ENCODE measurements at regions of chr4 and their contacts with region 1.

Region 1: DNA sequence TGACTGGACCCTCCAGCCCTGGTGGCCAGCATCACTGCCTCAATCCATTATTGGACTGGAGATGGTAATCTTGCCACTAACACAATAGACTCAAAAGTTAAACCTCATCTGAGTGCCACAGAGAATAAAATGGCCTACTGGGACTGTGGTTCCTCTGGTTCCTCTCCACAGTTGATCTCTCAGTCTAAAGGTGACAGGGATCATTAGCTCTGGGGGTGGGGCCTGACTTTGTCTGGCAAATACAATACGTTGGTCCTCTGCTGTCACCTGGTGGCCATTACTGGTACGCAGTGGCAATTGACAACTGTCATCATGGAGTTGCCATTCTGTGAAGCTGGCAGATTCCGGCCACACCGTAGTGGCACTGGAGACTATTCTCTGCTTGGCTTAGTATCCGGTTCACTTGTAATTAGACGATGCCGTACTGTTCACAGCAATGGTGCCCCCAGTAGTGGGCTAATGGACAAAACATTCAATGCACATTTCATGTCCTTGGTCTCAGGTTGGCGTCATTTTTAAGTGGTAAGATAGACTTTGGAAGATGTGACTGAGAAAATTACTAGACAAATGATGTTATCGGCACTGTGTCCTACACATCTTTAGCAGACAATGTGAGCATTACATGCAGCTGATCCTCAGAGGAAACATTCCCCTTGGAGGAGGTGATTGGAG is 6.7 kb downstream of the FGFBP2 start:
- DNase-seq: peak; percentile 84

Region 2: DNA sequence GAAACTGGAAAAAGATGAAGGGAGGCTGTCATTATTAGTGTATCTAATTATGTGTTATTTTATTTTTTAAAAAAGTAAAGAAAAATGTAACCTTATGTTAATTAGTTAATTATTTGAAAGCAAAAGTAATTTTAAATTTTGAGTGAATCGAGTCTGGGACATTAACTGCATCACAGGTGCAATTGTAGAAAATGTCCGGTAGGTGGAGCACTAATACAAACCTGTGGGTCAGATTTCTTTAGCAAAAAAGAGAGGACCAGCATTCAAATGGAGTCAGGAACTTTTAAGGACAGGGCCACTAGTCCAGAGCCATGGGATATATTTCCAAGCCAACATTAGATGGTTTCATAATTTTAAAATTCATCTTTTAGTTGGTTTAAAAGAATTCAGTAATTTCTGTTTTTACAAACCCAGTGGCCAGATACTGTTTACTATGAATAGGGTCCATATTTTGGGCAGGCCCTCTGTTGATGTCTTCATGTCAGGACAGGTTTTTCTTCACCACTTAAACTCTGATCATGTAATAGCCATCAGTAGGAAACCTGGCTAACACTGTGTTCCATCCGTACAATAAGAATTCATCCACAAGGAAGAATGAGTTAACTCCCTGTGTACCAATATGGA is 226.3 kb before region 1 on chr4:
- intact Hi-C with region 1: loop called (anchors 2 kb)
- DNase-seq: no peak

Region 3: DNA sequence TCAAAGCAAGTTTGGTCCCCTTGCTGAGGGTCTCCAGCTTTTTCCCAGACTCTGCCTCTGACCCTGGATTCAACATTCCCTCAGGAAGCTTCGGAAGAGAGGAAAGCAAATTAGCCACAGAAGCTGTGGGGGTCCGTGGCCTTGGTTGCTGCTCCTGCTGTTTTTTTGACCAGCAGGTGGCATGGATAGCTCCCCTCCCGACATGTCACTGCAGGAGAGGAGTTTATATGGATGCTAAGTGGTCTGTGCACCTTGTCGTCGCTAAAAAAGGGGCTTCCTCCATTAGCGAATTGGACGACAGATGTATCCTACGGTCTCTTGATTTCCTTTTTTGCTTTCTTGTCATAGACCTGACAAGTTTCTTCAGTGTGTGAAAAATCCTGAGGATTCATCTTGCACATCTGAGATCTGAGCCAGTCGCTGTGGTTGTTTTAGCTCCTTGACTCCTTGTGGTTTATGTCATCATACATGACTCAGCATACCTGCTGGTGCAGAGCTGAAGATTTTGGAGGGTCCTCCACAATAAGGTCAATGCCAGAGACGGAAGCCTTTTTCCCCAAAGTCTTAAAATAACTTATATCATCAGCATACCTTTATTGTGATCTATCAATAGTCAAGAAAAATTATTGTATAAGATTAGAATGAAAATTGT is 108.0 kb before region 1 on chr4:
- intact Hi-C with region 1: no loop called
- DNase-seq: no peak

Region 4: GRCh38 chr4:16011173-16011572 is 54.9 kb after region 1 on chr4:
- intact Hi-C with region 1: no loop called
- DNase-seq: no peak

Measured in cardiac septum (tissue), 1 donor.